Gastrocnemius medialis (tissue), 4 donors: ENCODE measurements at regions of chr1 and their contacts with region 1.

Region 1: GRCh38 chr1:40691538-40692428 is at the start of gene NFYC:
- DNase-seq: peak; percentile 97 to 98
- ATAC-seq: peak; percentile 96 to 97
- H3K4me3 ChIP-seq: peak within 1 kb of the TSS; percentile 83 to 92 (median 86)
- H3K27ac ChIP-seq: peak within 1 kb of the TSS; percentile 95 to 99 (median 98)
- H3K4me1 ChIP-seq: peaks cover 33 to 34% of the 10 kb centered on the region in 2 donors
- H3K27me3 ChIP-seq: no peaks in the 10 kb centered on the region
- CTCF ChIP-seq: peak in 1 of 5 experiments; percentile 21
- POLR2A ChIP-seq: peak; percentile 95 to 96
- total RNA-seq, gene NFYC: 45.3 to 58.6 (median 57.4) TPM

Region 2: DNA sequence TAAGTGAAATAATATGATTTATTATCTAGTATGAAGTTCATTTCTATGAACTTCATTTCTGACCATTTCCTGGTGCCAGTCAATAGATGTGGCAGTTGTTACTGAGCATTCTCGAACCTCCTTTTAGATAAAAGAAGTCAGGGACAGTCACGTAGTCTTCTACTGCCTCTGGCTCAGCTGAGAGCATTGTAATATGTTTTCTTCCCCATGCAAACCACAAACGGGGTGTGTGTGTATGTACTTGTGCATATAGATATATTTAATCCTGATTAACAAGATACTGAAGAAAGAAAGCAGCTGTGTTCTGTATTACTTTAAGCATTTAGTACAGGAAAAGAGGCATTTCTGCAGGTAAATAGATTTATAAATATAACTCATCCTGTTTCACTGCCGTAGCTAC is 138.8 kb before region 1 on chr1:
- in situ Hi-C with region 1: no loop called
- intact Hi-C with region 1: no loop called
- DNase-seq: no peak
- ATAC-seq: no peak
- H3K4me3 ChIP-seq: no peak overlapping the region
- H3K27ac ChIP-seq: no peak overlapping the region
- H3K4me1 ChIP-seq: no peaks in the 10 kb centered on the region
- H3K27me3 ChIP-seq: no peaks in the 10 kb centered on the region
- CTCF ChIP-seq: no peak
- POLR2A ChIP-seq: no peak

Region 3: GRCh38 chr1:40709100-40709801 is 17.5 kb after region 1 on chr1:
- in situ Hi-C with region 1: no loop called
- intact Hi-C with region 1: loop called (anchors 1 kb)
- DNase-seq: peak; percentile 84 to 88
- ATAC-seq: peak; percentile 93 to 98
- H3K4me3 ChIP-seq: peak overlapping the region; percentile 56 to 63 (median 62)
- H3K27ac ChIP-seq: peak overlapping the region; percentile 82 to 91 (median 90)
- H3K4me1 ChIP-seq: peaks cover 67 to 73% of the 10 kb centered on the region in 2 donors
- H3K27me3 ChIP-seq: no peaks in the 10 kb centered on the region
- CTCF ChIP-seq: no peak
- POLR2A ChIP-seq: peak in 1 of 2 donors; percentile 23

Region 4: DNA sequence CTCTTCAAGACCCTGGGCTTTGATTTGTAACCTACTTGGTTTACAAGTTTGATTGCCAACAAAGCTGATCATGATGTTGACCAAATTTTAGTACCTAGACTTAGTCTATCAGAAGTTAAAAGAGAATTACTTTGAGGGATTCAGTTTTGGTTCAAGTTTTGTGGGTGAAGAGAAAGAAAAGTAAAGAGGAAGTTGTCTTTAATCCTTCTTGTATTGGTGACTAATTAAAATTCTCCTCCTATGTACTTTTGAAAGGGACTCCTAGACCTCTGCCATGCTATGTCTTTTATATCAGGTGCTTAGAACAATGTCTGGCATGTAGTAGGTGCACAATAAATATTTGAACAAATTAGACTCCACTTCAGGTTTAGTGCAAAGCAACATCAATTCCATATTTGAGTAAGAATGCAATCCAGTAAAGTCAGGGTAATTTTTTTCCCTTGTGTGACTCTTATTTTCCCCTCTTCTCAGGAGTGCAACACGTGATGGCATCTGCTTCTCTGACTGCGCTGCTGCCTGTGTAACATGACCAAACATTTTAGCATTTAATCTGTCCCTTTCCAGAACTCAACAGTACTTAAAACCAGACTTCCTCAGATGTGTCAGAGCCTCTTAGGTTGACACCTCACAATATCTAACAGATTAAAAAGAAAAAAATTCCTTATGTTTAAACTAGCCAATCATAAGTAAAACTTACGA is 50.7 kb after region 1 on chr1:
- in situ Hi-C with region 1: no loop called
- intact Hi-C with region 1: no loop called
- DNase-seq: no peak
- ATAC-seq: peak; percentile 28 to 32
- H3K4me3 ChIP-seq: no peak overlapping the region
- H3K27ac ChIP-seq: peak overlapping the region; percentile 19 to 60 (median 48)
- H3K4me1 ChIP-seq: peaks cover 38 to 55% of the 10 kb centered on the region in 2 donors
- H3K27me3 ChIP-seq: no peaks in the 10 kb centered on the region
- CTCF ChIP-seq: no peak
- POLR2A ChIP-seq: no peak

Region 5: DNA sequence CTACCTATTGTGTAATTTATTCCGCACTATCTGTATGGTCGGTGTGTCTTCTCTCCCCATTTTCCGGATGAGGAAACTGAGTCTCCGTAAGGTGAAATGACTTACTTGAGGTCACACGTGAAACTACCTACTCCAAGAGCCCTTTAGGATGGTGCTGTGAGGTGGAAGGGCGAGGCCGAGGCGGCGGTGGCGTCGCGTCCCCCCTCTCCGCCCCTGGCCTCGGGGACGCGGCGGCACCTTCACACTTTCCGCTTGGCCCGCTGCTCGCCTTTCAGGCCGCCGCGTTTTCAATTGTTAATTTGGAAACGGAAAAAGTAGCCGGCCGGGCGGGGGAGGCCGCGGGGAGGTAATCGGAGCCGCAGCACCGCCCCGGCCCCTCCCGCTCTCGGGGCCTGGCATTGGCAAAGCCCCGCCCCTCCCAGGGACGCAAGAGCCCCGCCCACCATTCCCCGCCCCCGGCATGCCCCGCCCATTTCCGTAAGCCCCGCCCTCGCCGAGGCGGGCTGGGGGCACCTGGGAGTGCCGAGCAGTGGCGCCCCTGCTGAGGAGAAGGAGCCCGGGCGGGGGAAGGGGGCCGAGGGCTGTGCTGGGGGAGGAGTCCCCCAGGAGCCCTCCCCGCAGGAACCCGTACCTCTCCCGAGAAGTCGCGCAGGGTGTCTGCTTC is 110.4 kb after region 1 on chr1:
- in situ Hi-C with region 1: no loop called
- intact Hi-C with region 1: loop called (anchors 5 kb)
- DNase-seq: peak; percentile 76 to 86
- ATAC-seq: peak; percentile 80 to 88
- H3K4me3 ChIP-seq: peak overlapping the region; percentile 53 to 67 (median 56)
- H3K27ac ChIP-seq: peak overlapping the region; percentile 76 to 89 (median 86)
- H3K4me1 ChIP-seq: peaks cover 51 to 54% of the 10 kb centered on the region in 2 donors
- H3K27me3 ChIP-seq: no peaks in the 10 kb centered on the region
- CTCF ChIP-seq: no peak
- POLR2A ChIP-seq: no peak

Region 6: GRCh38 chr1:40862008-40862863 is 170.5 kb after region 1 on chr1 and contains the start of gene CITED4:
- in situ Hi-C with region 1: loop called in 1 of 4 experiments (anchors 10 kb)
- intact Hi-C with region 1: loop called (anchors 2 kb)
- DNase-seq: peak; percentile 90 to 96
- ATAC-seq: peak; percentile 85 to 90
- H3K4me3 ChIP-seq: peak within 1 kb of the TSS; percentile 53 to 84 (median 71)
- H3K27ac ChIP-seq: peak within 1 kb of the TSS; percentile 81 to 93 (median 85)
- H3K4me1 ChIP-seq: peaks cover 11 to 18% of the 10 kb centered on the region in 2 donors
- H3K27me3 ChIP-seq: no peaks in the 10 kb centered on the region
- CTCF ChIP-seq: peak in 1 of 5 experiments; percentile 27
- POLR2A ChIP-seq: peak; percentile 95 to 97
- total RNA-seq, gene CITED4: 15.9 to 30.8 (median 23.1) TPM